ENCODE measurements at regions of chr12 and their contacts with region 1.

Region 1: DNA sequence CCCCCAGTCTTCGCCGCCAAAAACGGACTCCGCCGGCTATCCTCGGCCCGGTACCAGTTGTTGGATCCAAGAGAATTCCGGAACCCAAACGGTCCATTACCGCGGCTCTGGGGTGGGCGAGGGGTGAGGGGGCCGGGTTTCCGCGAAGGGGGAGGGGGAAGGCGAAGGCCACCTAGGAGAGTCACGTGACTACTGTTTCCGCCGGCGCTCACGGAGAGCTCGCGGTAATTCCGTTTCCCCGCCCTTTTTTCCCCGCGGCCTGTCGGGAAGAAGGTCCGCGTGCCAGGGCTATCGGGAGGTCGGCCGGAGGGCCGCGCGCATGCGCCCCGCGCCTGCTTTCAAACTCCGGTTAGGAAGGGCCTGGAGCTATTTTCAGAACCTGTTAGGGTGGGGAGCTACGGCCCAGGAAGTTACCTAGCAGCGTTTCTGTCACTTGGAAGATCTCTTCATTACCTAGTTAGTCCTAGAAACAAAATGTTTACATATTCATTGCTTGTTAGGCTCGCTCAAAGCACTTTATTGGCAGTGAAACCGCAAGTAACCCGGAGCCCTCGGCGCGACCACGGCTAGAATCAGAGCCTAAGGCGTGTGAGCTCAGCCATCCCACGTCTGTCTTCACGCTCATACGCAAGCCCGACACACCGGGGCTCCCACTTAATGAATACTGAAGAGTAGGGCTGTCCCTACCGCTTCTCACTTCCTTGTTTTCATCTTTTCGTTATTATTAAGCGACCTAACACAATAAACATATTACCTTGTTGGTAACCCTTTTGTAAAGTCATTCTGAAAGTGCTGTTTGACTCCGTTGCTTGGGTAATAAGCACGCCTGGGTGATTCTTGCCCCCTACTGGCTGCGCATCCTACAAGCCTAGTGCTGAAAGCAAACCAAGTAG is 624 bp upstream of the SBNO1 start:
- DNase-seq: peak; percentile 96
- ATAC-seq: peak; percentile 83
- H3K4me3 Mint-ChIP-seq: peak overlapping the region; percentile 95
- H3K27ac Mint-ChIP-seq: peak overlapping the region; percentile 94
- H3K4me1 Mint-ChIP-seq: peaks cover 9% of the 10 kb centered on the region
- H3K27me3 Mint-ChIP-seq: no peaks in the 10 kb centered on the region

Region 2: GRCh38 chr12:123271001-123271729 is 94.1 kb before region 1 on chr12:
- POLR2A ChIA-PET with region 1: interaction called, 25 read pairs
- DNase-seq: peak; percentile 86
- ATAC-seq: peak; percentile 64
- H3K4me3 Mint-ChIP-seq: no peak overlapping the region
- H3K27ac Mint-ChIP-seq: no peak overlapping the region
- H3K4me1 Mint-ChIP-seq: peaks cover 23% of the 10 kb centered on the region
- H3K27me3 Mint-ChIP-seq: no peaks in the 10 kb centered on the region

Region 3: DNA sequence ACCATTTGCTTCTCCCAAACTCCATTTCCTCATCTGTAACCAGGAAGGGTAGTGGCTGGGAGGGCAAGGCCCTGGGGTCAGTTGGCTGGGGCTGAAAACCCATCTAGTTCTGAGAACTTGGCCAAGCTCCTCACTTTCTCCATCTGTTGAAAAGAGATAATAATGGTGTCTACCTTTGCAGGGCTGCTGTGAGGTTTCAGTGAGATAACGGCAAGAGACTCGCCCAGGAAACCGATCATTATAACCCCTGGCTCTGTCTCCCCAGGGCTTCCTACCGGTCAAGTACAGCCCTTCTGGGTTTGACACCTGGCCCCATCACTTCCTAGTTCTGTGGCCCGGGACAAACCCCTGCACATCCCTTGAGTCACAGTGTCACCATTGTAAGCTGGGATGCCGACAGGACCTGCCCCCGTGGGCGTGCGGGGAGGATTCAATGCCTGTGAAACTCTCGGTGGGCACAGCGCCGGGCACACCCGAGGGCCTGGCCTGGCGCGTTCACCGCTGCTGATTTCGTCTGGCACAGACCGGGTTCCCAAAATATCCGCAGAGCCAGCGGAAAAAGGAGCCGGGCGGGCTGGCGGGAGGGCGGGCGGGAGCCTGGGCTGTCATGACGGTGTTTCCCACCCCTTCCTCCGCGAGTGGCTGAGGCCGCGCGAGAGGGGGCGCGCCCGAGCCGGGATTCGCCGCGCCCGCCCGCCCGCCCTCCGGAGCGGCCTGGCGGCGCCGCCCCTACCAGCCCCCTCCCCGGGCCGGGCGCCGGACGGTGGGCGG is 23.1 kb after region 1 on chr12:
- POLR2A ChIA-PET with region 1: interaction called, 86 read pairs
- DNase-seq: peak; percentile 86
- ATAC-seq: peak; percentile 50
- H3K4me3 Mint-ChIP-seq: peak overlapping the region; percentile 90
- H3K27ac Mint-ChIP-seq: peak overlapping the region; percentile 93
- H3K4me1 Mint-ChIP-seq: peaks cover 30% of the 10 kb centered on the region
- H3K27me3 Mint-ChIP-seq: no peaks in the 10 kb centered on the region

Region 4: DNA sequence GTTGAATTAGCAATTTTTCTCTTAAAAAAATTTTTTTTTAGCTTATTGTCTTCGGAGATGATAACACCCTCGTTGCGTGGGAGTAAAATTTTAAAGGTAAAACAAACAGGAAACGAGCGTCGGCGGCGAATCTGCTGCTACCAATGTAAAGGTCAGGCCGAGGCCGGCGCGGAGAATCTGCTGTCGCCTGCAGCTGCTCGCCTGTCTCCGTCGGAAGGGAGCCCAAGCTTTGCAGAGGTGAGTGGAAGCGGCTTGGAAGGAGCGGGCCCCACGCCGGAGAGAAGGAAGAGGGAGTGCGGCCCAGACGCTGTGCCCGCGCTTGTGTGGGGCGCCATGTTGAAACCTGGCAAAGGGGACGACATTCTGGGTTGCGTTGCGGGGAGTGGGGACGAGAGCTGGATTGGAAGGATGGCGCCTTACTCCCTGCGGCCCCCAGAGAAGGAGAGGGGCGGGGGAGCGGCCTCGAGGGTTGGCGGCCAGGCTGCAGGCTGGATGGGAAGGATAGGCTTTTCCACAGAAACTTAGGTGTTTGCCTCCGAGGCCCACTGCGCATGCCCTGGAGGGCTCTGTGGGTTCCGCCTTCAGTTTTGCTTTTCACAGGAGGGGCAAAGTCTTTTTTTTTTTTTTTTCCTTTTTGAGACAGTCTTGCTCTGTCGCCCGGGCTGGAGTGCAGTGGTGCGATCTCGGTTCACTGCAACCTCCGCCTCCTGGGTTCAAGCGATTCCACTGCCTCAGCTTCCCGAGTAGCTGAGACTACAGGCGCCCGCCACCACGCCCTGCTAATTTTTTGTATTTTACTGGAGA is 92.9 kb after region 1 on chr12 and contains the start of gene SNRNP35:
- POLR2A ChIA-PET with region 1: interaction called, 13 read pairs
- DNase-seq: peak; percentile 87
- ATAC-seq: peak; percentile 81
- H3K4me3 Mint-ChIP-seq: peak within 1 kb of the TSS; percentile 94
- H3K27ac Mint-ChIP-seq: peak within 1 kb of the TSS; percentile 99
- H3K4me1 Mint-ChIP-seq: peaks cover 13% of the 10 kb centered on the region
- H3K27me3 Mint-ChIP-seq: no peaks in the 10 kb centered on the region
- total RNA-seq, gene SNRNP35: 32.3 to 33.9 TPM